ENCODE measurements at regions of chr1 and their contacts with region 1.

Region 1: DNA sequence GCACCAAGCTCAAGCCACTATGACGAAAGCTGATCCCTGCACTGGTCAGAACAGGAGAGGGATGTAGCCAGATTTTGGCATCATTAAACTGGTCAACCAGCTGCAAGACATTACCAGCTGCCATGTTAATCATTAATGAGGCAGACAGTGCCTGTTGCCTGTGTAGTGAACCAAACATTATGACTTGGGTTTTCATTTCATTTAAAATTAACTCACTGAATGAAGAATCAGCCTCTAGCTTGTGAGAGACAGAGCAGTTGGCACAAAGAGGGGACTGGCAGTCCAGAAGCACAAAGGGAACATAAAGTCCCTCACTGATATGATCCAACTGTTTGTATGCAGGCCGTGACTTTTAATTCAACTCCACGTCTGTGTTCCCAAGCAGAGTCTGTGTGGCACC is 318.9 kb downstream of the SEC16B start:
- DNase-seq: no peak
- ATAC-seq: peak; percentile 92

Region 2: GRCh38 chr1:177525176-177525575 is 125.8 kb before region 1 on chr1:
- intact Hi-C with region 1: loop called (anchors 10 kb)
- DNase-seq: no peak
- ATAC-seq: peak; percentile 98

Measured in Right ventricle myocardium inferior (tissue), 1 donor.